ENCODE measurements at regions of chr2 and their contacts with region 1.

Region 1: GRCh38 chr2:24971536-24972314 is at the start of gene DNAJC27:
- DNase-seq: peak; percentile 97
- H3K4me3 Mint-ChIP-seq: peak within 1 kb of the TSS; percentile 96
- H3K27ac Mint-ChIP-seq: peak within 1 kb of the TSS; percentile 100
- H3K4me1 Mint-ChIP-seq: peaks cover 17% of the 10 kb centered on the region
- H3K27me3 Mint-ChIP-seq: peaks cover 1% of the 10 kb centered on the region
- total RNA-seq, gene DNAJC27: 4.9 and 6.1 TPM in 2 replicates

Region 2: GRCh38 chr2:24418166-24418841 is 553.4 kb before region 1 on chr2:
- intact Hi-C with region 1: loop called (anchors 5 kb)
- DNase-seq: no peak
- H3K4me3 Mint-ChIP-seq: no peak overlapping the region
- H3K27ac Mint-ChIP-seq: no peak overlapping the region
- H3K4me1 Mint-ChIP-seq: no peaks in the 10 kb centered on the region
- H3K27me3 Mint-ChIP-seq: peaks cover 6% of the 10 kb centered on the region

Region 3: GRCh38 chr2:24920098-24920808 is 51.5 kb before region 1 on chr2 and contains the start of gene ADCY3:
- intact Hi-C with region 1: loop called (anchors 1 kb)
- DNase-seq: peak; percentile 55
- H3K4me3 Mint-ChIP-seq: peak within 1 kb of the TSS; percentile 85
- H3K27ac Mint-ChIP-seq: peak within 1 kb of the TSS; percentile 80
- H3K4me1 Mint-ChIP-seq: peaks cover 26% of the 10 kb centered on the region
- H3K27me3 Mint-ChIP-seq: no peaks in the 10 kb centered on the region
- total RNA-seq, gene ADCY3: 108 and 112 TPM in 2 replicates

Region 4: GRCh38 chr2:25131567-25132298 is 160.0 kb after region 1 on chr2:
- intact Hi-C with region 1: loop called (anchors 1 kb)
- DNase-seq: no peak
- H3K4me3 Mint-ChIP-seq: peak overlapping the region; percentile 45
- H3K27ac Mint-ChIP-seq: no peak overlapping the region
- H3K4me1 Mint-ChIP-seq: peaks cover 2% of the 10 kb centered on the region
- H3K27me3 Mint-ChIP-seq: peaks cover 53% of the 10 kb centered on the region

Region 5: DNA sequence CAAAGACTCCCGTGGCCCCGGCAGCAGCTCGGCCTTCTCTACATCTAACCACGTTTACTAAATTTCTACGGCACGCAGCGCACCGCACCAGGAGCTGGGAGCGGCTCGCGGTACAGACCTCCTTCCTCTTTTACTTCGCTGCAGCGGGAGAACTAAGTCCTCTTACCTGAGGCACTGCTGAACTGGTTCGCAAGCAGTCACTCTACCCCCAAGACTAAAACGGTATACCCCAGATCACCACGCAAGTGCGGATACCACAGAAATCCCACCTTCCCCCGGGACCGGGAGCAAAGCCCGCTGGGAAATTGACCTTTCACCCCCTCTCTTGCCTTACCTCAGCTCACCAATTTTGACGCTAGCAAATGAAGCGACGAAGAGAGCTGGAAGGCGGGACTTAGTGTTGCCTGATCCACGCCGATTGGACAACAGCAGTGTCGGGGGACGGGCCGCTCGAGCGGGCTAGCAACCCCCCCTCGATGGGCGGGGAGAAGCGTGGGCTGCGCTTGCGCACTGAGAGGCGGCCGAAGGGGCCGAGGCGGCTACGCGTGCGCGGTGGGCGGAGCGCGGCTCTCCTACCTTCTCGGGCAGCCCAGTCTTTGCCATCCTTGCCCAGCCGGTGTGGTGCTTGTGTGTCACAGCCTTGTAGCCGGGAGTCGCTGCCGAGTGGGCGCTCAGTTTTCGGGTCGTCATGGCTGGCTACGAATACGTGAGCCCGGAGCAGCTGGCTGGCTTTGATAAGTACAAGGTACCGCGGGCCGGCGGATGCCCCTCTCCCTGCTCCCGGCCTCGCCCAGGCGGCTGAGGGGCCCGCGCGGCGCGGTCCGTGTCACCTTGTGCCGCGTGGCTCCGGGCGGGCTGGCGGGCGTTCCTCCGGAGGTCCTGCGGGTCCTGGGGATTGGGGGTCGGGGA is 1374.1 kb after region 1 on chr2 and contains the start of gene SELENOI:
- intact Hi-C with region 1: loop called (anchors 5 kb)
- DNase-seq: peak; percentile 99
- H3K4me3 Mint-ChIP-seq: peak within 1 kb of the TSS; percentile 99
- H3K27ac Mint-ChIP-seq: peak within 1 kb of the TSS; percentile 99
- H3K4me1 Mint-ChIP-seq: peaks cover 25% of the 10 kb centered on the region
- H3K27me3 Mint-ChIP-seq: no peaks in the 10 kb centered on the region
- total RNA-seq, gene SELENOI: 45.5 and 51.4 TPM in 2 replicates